IMR-90 (cell line): ENCODE measurements at regions of chr2 and their contacts with region 1.

Region 1: DNA sequence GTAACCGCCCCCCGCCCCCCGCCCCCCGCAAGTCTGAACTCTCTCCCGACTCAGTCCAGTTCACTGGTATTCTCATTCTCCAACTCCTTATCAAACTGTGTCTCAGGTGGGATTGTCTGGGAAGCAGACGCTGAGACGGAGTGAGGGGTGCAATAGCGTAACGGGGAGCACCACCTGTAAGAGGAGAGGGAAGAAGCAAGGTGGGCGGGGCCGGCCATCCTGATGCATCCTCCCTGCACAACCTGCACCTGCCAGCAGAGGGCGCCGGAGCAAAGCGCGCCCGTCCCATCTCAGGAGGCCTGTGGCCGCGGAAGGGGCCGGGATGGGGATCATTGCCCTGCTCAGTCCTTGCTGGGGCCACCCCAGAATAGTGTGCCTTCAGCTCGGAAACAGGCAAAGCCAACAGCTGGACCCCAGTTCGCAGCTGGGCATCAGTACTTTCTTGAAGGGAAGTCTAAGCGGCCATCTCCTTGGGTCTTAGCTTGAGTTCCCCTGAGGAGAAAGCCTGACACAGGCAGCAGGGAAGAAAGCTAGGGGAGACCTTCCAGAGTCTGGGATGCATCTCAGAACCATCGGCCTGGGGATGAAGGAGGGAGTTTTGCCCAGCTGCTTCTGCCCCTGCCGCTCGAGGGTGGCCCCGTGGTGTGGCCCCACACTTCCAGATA is 208.0 kb downstream of the TFCP2L1 start:
- DNase-seq: peak; percentile 28
- ATAC-seq: peak; percentile 59
- H3K4me3 ChIP-seq: no peak overlapping the region
- H3K27ac ChIP-seq: no peak overlapping the region
- H3K4me1 ChIP-seq: no peaks in the 10 kb centered on the region; the same call in 1 of the 2 replicates
- H3K27me3 ChIP-seq: peaks cover 17% of the 10 kb centered on the region; the same call in 1 of the 2 replicates
- CTCF ChIP-seq: peak; percentile 71
- POLR2A ChIP-seq: no peak
- RAD21 ChIP-seq: 0 out of 2 replicates have a peak, but pooled peaks have one; percentile 18

Region 2: GRCh38 chr2:120343433-120344105 is 733.4 kb before region 1 on chr2:
- CTCF ChIA-PET with region 1: no interaction called
- POLR2A ChIA-PET with region 1: no interaction called
- dilution Hi-C with region 1: no loop called
- in situ Hi-C with region 1: loop called (anchors 10 kb)
- intact Hi-C with region 1: no loop called
- DNase-seq: peak; percentile 68
- ATAC-seq: peak; percentile 84
- H3K4me3 ChIP-seq: no peak overlapping the region
- H3K27ac ChIP-seq: no peak overlapping the region
- H3K4me1 ChIP-seq: peaks cover 6% of the 10 kb centered on the region; the same call in 1 of the 2 replicates
- H3K27me3 ChIP-seq: peaks cover 90% of the 10 kb centered on the region
- CTCF ChIP-seq: peak; percentile 92
- POLR2A ChIP-seq: no peak
- RAD21 ChIP-seq: peak; percentile 97

Region 3: GRCh38 chr2:120833127-120833675 is 243.8 kb before region 1 on chr2:
- CTCF ChIA-PET with region 1: no interaction called
- POLR2A ChIA-PET with region 1: interaction called, 12 read pairs
- dilution Hi-C with region 1: no loop called
- in situ Hi-C with region 1: no loop called
- intact Hi-C with region 1: no loop called
- DNase-seq: no peak
- ATAC-seq: no peak
- H3K4me3 ChIP-seq: no peak overlapping the region
- H3K27ac ChIP-seq: no peak overlapping the region
- H3K4me1 ChIP-seq: peaks cover 13% of the 10 kb centered on the region; the same call in 1 of the 2 replicates
- H3K27me3 ChIP-seq: no peaks in the 10 kb centered on the region
- CTCF ChIP-seq: no peak
- POLR2A ChIP-seq: no peak
- RAD21 ChIP-seq: no peak

Region 4: GRCh38 chr2:121736462-121737341 is 659.7 kb after region 1 on chr2 and contains the start of gene NIFK:
- CTCF ChIA-PET with region 1: no interaction called
- POLR2A ChIA-PET with region 1: no interaction called
- dilution Hi-C with region 1: no loop called
- in situ Hi-C with region 1: loop called (anchors 25 kb)
- intact Hi-C with region 1: no loop called
- DNase-seq: peak; percentile 95
- ATAC-seq: peak; percentile 98
- H3K4me3 ChIP-seq: peak within 1 kb of the TSS; percentile 79
- H3K27ac ChIP-seq: peak within 1 kb of the TSS; percentile 99
- H3K4me1 ChIP-seq: no peaks in the 10 kb centered on the region
- H3K27me3 ChIP-seq: peaks cover under 1% of the 10 kb centered on the region; the same call in 1 of the 2 replicates
- CTCF ChIP-seq: no peak
- POLR2A ChIP-seq: peak; percentile 62; the same call in 1 of the 2 replicates
- RAD21 ChIP-seq: no peak
- total RNA-seq, gene NIFK: 19.5 and 47.8 TPM in 2 replicates